Gastrocnemius medialis (tissue), 4 donors: ENCODE measurements at regions of chr3 and their contacts with region 1.

Region 1: GRCh38 chr3:119293871-119294695 is at the start of gene ARHGAP31:
- DNase-seq: peak; percentile 32 to 46
- ATAC-seq: peak; percentile 68 to 77
- H3K4me3 ChIP-seq: peak within 1 kb of the TSS; percentile 64 to 88 (median 76)
- H3K27ac ChIP-seq: peak within 1 kb of the TSS; percentile 67 to 82 (median 74)
- H3K4me1 ChIP-seq: peaks cover 6 to 15% of the 10 kb centered on the region in 2 donors
- H3K27me3 ChIP-seq: no peaks in the 10 kb centered on the region
- CTCF ChIP-seq: no peak
- POLR2A ChIP-seq: peak in 1 of 2 donors; percentile 19
- total RNA-seq, gene ARHGAP31: 6.2 to 9.7 (median 7.3) TPM

Region 2: GRCh38 chr3:119240591-119241434 is 53.3 kb before region 1 on chr3 and contains the start of gene B4GALT4:
- in situ Hi-C with region 1: no loop called
- intact Hi-C with region 1: loop called (anchors 5 kb)
- DNase-seq: peak; percentile 72 to 74
- ATAC-seq: peak; percentile 89 to 95
- H3K4me3 ChIP-seq: peak within 1 kb of the TSS; percentile 67 to 82 (median 70)
- H3K27ac ChIP-seq: peak within 1 kb of the TSS; percentile 77 to 89 (median 86)
- H3K4me1 ChIP-seq: peaks cover 0 to 22% of the 10 kb centered on the region in 2 donors
- H3K27me3 ChIP-seq: no peaks in the 10 kb centered on the region
- CTCF ChIP-seq: peak in 1 of 5 experiments; percentile 10
- POLR2A ChIP-seq: peak; percentile 71 to 79
- total RNA-seq, gene B4GALT4: 5.7 to 13.4 (median 7.7) TPM

Region 3: DNA sequence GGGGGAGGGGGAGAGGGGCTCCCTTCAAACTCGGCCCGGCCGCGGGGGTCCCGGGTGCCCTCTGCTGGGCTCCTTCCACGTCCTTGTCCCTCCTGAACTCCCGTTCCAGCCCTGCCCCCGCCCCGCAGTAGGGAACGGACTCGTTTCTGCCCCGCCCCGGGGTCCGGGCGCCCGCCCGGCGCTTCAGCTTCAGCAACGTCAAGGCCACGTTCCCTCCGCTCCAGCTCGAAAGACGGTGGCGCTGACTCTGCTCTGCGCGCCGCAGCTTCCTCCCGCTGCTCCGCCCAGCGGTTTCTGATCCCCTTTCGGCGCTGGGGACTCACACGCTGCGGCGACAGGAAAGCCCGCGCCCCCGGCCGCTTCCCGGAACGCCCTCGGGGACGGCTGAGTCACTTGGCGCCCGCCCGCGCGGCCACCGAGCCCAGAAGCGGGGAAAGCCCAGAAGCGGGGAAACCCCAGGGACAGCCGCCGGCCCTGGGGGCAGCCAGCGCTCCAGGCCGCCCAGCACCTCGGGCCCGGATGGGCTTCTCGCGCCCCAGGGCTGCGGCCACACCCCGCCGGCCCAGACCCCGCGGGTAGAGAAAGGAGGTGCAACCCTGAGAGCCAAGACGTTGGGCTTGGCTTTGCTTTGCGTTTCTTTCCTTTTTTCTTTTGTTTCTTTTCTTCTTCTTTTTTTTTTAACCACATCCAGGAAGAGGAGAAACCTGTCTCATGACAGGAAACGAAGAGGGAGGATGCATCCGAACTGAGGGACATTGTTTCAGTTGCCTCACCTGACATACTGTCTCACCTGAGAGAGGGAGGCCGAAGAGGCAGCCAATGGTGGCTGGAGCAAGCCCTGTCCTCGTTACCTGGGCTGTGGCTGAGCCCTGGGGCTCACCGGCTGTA is 29.0 kb after region 1 on chr3:
- in situ Hi-C with region 1: no loop called
- intact Hi-C with region 1: loop called (anchors 1 kb)
- DNase-seq: peak; percentile 58 to 60
- ATAC-seq: peak; percentile 77 to 83
- H3K4me3 ChIP-seq: peak overlapping the region; percentile 54 to 71 (median 62)
- H3K27ac ChIP-seq: peak overlapping the region; percentile 69 to 81 (median 78)
- H3K4me1 ChIP-seq: peaks cover 0 to 10% of the 10 kb centered on the region in 2 donors
- H3K27me3 ChIP-seq: no peaks in the 10 kb centered on the region
- CTCF ChIP-seq: peak in 2 of 5 experiments; percentile 11 to 14
- POLR2A ChIP-seq: peak in 1 of 2 donors; percentile 40

Region 4: DNA sequence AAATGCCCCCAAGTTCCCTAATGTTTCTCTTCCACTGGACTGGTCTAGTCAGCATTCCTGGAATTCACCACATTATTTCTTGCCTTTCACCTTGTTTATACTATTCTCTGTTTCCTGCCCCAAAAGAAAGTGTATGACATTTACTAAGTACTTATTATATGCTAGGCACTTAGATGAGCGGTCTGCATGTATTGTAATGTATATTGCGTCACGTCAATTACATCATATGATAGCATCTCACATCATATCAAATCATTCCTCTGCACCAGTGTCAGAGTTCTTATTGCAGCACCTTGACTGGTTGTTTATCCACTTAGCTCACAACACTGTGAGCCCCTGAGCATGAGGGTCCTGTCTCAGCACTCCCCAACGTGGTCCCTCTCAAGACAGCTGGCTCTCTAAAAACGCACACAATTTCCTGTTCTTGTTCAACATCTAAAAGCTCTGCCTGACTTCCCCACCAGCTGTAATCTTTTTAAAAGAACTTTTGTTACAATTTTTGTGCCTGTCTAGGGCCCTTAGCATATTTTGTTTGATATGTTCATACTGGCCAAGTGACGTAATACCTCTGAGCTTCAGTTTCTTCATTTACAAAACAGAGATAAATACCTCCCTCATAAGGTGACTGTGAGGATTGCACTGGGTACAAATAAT is 58.9 kb after region 1 on chr3:
- in situ Hi-C with region 1: no loop called
- intact Hi-C with region 1: loop called (anchors 10 kb)
- DNase-seq: no peak
- ATAC-seq: peak in 1 of 2 donors; percentile 30
- H3K4me3 ChIP-seq: no peak overlapping the region
- H3K27ac ChIP-seq: peak overlapping the region in 3 of 4 donors; percentile 33 to 66 (median 43)
- H3K4me1 ChIP-seq: peaks cover 4 to 23% of the 10 kb centered on the region in 2 donors
- H3K27me3 ChIP-seq: no peaks in the 10 kb centered on the region
- CTCF ChIP-seq: peak in 1 of 5 experiments; percentile 15
- POLR2A ChIP-seq: no peak